Activated CD4-positive, alpha-beta T cell treated with anti-CD3 and anti-CD28 coated beads for 36 hours (primary cell): ENCODE measurements at regions of chr6 and their contacts with region 1.

Region 1: GRCh38 chr6:135094403-135094848 is 39.8 kb upstream of the HBS1L start:
- DNase-seq: peak; percentile 56
- ATAC-seq: peak; percentile 89
- H3K4me3 Mint-ChIP-seq: no peak overlapping the region
- H3K27ac Mint-ChIP-seq: peak overlapping the region; percentile 79
- H3K4me1 Mint-ChIP-seq: peaks cover 57% of the 10 kb centered on the region
- H3K27me3 Mint-ChIP-seq: no peaks in the 10 kb centered on the region

Region 2: GRCh38 chr6:135033238-135033637 is 61.2 kb before region 1 on chr6:
- CTCF ChIA-PET with region 1: no interaction called
- POLR2A ChIA-PET with region 1: no interaction called
- intact Hi-C with region 1: no loop called
- DNase-seq: no peak
- ATAC-seq: no peak
- H3K4me3 Mint-ChIP-seq: no peak overlapping the region
- H3K27ac Mint-ChIP-seq: no peak overlapping the region
- H3K4me1 Mint-ChIP-seq: peaks cover 58% of the 10 kb centered on the region
- H3K27me3 Mint-ChIP-seq: no peaks in the 10 kb centered on the region

Region 3: DNA sequence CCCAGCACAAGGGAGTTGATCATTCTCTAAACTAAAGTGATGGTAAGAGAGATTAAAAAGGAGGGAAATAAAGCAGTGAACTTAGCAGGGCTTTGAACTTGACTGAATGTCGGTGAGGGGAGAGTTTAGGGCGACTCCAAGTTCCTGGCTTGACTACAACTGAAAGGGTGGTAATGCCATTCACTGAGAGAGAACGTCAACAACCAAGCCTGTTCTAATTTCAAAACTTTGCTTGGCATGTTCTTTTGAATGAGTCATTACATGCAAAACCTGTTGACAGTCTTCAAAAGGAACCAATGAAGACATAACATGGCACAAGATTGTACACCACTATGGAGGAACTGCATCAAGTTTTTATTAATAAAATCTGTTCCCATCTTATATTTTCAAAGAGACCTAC is 76.4 kb after region 1 on chr6:
- CTCF ChIA-PET with region 1: no interaction called
- POLR2A ChIA-PET with region 1: no interaction called
- intact Hi-C with region 1: loop called in 1 of 2 experiments (anchors 2 kb)
- DNase-seq: peak; percentile 63
- ATAC-seq: peak; percentile 89
- H3K4me3 Mint-ChIP-seq: peak overlapping the region; percentile 20
- H3K27ac Mint-ChIP-seq: peak overlapping the region; percentile 88
- H3K4me1 Mint-ChIP-seq: peaks cover 25% of the 10 kb centered on the region
- H3K27me3 Mint-ChIP-seq: no peaks in the 10 kb centered on the region